AG04449 (cell line): ENCODE measurements at regions of chr1 and their contacts with region 1.

Region 1: DNA sequence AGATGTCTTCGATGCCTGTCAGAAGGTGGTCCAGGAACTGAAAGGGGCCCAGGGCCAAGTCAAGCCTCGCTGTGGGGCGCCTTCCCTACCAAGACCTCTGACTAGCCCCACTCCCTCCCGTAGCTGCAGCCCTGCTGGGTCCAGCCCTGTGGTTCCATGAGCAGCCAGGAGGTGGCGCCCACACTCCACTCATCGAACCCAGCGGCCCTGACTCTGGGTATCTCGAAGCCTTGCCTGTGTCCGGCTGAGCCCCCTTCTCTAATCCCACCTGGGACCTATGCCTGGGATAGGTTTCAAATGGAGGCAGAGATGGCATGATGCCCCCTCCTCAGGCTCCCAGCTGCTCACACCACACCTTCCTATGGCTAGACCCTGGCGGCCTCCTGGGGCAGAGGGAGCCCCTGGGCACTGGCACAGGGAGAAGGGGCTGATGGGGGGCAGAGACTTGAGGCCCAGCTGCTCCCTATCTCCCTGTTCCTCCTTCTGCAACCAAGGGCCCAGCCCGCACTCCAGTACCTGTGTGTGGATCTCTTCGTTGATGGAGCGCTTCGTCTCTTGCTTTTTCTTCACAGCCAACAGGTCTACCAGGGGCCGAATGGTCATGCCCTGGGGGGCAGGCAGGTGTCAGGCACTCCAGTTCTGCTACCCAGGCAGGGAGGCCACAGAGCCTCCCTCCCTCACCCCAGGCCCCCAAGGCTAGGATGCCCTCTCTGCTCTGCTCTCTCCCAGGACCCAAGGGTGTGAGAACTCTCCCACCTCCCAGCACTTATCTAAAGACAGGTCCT is 52.0 kb downstream of the SLC9A1 start:
- DNase-seq: no peak
- H3K4me3 ChIP-seq: no peak overlapping the region
- CTCF ChIP-seq: peak; percentile 94

Region 2: GRCh38 chr1:26999440-26999987 is 103.4 kb before region 1 on chr1:
- CTCF ChIA-PET with region 1: interaction called, 121 read pairs
- POLR2A ChIA-PET with region 1: interaction called, 4 read pairs
- DNase-seq: peak; percentile 96
- H3K4me3 ChIP-seq: no peak overlapping the region
- CTCF ChIP-seq: peak; percentile 22

Region 3: DNA sequence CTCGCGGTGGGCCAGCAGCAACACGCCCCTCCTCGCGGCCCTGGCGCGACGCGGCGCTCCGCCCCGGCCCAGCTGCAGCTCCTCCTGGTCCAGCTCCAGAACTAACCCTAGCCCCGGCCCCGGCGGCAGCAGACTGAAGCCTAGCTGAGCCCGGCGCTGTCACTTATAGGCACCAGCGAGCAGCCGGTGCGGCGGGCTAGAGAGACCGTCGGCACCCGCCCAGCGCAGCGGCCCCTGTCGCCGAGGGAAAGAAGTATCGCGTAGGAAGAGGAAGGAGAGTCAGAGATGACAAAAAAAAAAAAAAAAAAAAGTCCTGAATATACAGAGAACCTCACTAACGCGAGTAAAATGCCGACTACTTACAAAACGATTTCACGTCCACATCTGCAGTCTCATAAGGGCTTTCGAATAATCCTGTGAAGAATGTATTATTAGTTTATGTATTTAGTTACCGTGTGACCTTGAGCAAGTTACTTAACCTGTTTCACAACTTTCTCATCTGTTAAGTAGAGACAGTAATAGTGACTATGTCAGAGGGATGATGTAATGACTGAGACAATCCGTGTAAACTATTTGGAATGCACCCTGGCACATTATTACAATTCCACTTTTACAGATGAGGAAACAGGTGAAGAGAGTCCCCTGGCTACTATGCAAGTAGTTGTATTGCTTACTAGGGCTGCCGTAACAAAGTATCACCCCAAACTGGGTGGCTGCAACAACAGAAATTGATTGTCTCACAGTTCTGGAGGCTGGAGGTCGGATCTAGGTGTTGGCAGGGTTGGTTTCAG is 52.3 kb after region 1 on chr1 and contains the start of gene SLC9A1:
- CTCF ChIA-PET with region 1: interaction called, 23 read pairs
- POLR2A ChIA-PET with region 1: interaction called, 4 read pairs
- DNase-seq: peak; percentile 56
- H3K4me3 ChIP-seq: peak within 1 kb of the TSS; percentile 66
- CTCF ChIP-seq: peak; percentile 89

Region 4: GRCh38 chr1:27192039-27192529 is 89.2 kb after region 1 on chr1:
- CTCF ChIA-PET with region 1: interaction called, 46 read pairs
- POLR2A ChIA-PET with region 1: no interaction called
- DNase-seq: no peak
- H3K4me3 ChIP-seq: no peak overlapping the region
- CTCF ChIP-seq: no peak

Region 5: DNA sequence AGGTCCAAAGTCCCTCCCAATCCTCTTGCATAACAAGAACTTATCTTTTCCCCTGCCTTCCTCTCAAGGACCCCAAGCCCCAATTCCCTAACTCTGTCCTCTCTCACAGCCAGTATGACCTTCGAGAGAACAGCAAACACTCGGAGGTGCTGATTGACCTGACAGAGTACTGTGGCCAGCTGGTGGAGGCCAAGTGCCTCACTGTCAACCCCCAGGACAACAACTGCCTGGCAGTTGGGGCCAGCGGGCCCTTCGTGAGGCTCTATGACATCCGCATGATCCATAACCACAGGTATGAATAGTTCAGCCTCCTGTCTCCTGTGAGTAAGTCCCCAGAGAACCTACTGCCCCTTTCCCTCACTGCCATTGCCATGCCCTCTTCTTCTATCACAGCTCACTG is 189.2 kb after region 1 on chr1:
- CTCF ChIA-PET with region 1: interaction called, 408 read pairs
- POLR2A ChIA-PET with region 1: interaction called, 3 read pairs
- DNase-seq: no peak
- H3K4me3 ChIP-seq: no peak overlapping the region
- CTCF ChIP-seq: no peak

Region 6: DNA sequence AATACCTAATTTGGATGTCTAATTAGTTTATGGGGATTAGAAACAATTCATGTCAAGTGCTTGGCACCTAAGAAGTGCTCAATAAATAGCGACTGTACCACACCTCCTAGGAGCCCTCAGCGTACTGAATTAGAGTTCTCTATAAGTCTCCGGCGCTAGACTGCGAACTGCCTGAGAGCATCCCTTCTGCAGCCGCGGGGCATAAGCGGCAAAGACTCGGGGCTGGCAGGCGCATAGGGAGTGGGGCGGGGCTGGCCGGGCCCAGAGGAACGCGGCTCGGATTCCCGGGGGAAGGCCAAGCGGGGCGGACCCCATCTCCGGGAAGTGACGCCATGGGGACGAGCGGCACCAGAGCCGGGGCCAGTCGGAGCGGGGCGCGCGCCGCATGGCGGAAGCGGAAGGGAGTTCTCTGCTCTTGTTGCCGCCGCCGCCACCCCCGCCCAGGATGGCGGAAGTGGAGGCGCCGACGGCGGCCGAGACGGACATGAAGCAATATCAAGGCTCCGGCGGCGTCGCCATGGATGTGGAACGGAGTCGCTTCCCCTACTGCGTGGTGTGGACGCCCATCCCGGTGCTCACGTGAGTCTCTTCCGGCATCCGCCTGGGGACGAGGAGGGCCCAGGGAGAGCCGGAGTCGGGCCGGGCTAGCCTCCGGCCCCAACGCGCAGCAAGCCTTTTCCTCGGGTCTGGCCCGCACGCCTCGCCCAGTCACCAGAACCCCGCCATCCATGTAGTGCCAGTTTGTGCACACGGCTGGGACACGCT is 219.1 kb after region 1 on chr1 and contains the start of gene TMEM222:
- CTCF ChIA-PET with region 1: no interaction called
- POLR2A ChIA-PET with region 1: no interaction called
- DNase-seq: peak; percentile 71
- H3K4me3 ChIP-seq: peak within 1 kb of the TSS; percentile 100
- CTCF ChIP-seq: peak; percentile 14